H1 (cell line): ENCODE measurements at regions of chr14 and their contacts with region 1.

Region 1: DNA sequence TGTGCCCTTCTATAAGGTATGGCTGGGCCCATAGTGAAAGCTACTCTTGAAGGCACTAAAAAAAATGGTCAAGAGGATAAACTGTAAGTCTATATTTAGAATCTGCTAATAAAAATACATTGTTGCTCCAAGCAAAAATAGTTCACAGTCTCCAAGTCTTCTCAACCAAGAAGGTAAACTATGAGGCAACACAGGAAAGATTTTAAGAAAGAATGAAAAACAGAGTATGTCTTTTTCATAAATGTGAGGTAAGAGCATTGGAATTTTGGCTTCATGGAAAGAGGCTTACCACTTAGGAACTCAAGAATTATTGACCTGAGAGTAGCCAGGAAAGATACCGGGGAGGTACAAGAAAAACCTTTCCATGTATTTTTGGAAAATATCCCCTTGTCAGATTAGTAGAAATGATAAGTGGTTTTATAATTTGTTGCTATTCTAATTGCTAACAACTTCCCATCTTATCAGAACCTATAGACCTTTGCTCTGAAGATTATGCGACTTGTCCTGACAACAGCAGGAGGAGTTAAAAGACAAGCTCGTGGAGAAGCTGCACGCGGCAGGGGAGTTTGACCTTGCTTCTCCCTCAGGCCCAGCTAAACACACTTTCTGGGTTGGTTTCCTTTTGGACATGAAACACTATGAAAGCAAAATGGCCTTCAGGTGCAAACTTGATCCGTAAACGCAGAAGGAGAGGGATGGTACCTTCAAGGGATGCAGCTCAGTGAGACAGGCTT is 238.1 kb downstream of the FOXN3 start:
- DNase-seq: peak in 1 of 2 experiments; percentile 38
- H3K4me3 ChIP-seq: no peak overlapping the region
- H3K27ac ChIP-seq: no peak overlapping the region
- H3K4me1 ChIP-seq: peaks cover 0 to 2% (median 1%) of the 10 kb centered on the region in 4 experiments; a peak in 3 of 7 replicates
- H3K27me3 ChIP-seq: no peaks in the 10 kb centered on the region
- CTCF ChIP-seq: no peak
- EP300 ChIP-seq: no peak
- POLR2A ChIP-seq: no peak
- RAD21 ChIP-seq: no peak

Region 2: DNA sequence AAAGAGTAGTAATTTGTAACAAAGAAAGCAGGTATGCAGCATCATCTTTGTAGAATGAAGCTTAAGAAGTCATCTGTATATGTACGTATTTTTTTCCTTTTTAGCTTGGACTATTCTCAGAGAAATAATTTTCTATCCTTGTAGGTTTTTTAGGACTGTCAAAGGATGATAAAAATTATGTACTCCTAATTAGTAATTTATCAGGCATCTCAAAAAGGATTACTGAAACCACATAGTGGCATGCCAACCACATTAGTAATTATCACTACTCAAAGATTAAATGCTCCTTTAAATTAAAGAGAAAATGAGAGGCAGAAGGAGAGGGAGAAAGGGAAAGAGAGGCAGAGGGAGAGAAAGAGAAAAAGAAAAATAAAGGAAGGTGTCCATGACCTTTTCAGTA is 337.2 kb before region 1 on chr14:
- CTCF ChIA-PET with region 1: no interaction called
- POLR2A ChIA-PET with region 1: no interaction called
- DNase-seq: no peak
- H3K4me3 ChIP-seq: no peak overlapping the region
- H3K27ac ChIP-seq: no peak overlapping the region
- H3K4me1 ChIP-seq: no peaks in the 10 kb centered on the region
- H3K27me3 ChIP-seq: no peaks in the 10 kb centered on the region
- CTCF ChIP-seq: no peak
- EP300 ChIP-seq: no peak
- POLR2A ChIP-seq: no peak
- RAD21 ChIP-seq: no peak

Region 3: GRCh38 chr14:89093083-89093730 is 85.8 kb before region 1 on chr14:
- CTCF ChIA-PET with region 1: no interaction called
- POLR2A ChIA-PET with region 1: no interaction called
- DNase-seq: no peak
- H3K4me3 ChIP-seq: no peak overlapping the region
- H3K27ac ChIP-seq: no peak overlapping the region
- H3K4me1 ChIP-seq: no peaks in the 10 kb centered on the region
- H3K27me3 ChIP-seq: no peaks in the 10 kb centered on the region; a peak in 1 of 7 replicates
- CTCF ChIP-seq: no peak
- EP300 ChIP-seq: no peak
- POLR2A ChIP-seq: no peak
- RAD21 ChIP-seq: no peak

Region 4: GRCh38 chr14:89165189-89166181 is 13.5 kb before region 1 on chr14:
- CTCF ChIA-PET with region 1: interaction called, 41 read pairs
- POLR2A ChIA-PET with region 1: interaction called, 3 read pairs
- DNase-seq: no peak
- H3K4me3 ChIP-seq: no peak overlapping the region
- H3K27ac ChIP-seq: no peak overlapping the region
- H3K4me1 ChIP-seq: no peaks in the 10 kb centered on the region
- H3K27me3 ChIP-seq: no peaks in the 10 kb centered on the region
- CTCF ChIP-seq: no peak
- EP300 ChIP-seq: no peak
- POLR2A ChIP-seq: no peak
- RAD21 ChIP-seq: no peak

Region 5: DNA sequence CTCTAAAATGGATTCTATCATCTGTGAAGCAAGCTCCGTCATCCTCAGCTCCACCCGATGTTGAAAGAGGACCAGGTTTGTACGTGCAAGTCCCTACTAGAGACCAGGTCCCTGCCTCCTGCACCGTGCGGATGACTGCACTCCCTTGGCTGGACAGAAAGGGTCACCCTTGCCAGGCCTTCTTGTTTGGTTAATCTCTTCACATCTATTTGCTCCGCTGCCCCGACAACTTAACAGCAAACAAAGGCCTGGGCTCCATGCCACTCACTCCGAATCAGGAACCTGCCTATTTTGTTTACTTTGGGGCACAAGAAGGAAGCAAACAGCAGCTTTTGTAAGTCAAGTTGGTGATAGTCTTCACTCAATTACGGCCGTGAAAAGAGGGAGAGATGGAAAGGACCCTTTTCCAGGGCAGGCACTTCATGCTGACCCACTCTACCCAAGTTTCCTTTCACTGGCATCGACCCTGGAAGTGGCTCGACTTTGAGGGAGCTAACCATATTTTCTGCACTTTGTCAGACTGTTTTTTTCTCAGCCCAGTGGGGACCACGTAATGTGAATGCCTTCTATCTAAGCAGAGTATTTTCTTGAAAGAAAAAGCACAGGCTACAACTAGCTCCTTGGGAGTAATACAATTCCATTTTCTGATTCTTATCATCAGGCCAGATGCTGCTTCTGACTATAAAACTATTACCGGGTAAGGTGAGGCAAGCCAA is 35.4 kb after region 1 on chr14:
- CTCF ChIA-PET with region 1: interaction called, 13 read pairs
- POLR2A ChIA-PET with region 1: interaction called, 3 read pairs
- DNase-seq: no peak
- H3K4me3 ChIP-seq: no peak overlapping the region
- H3K27ac ChIP-seq: no peak overlapping the region; the same call in 1 of the 2 replicates
- H3K4me1 ChIP-seq: no peaks in the 10 kb centered on the region
- H3K27me3 ChIP-seq: no peaks in the 10 kb centered on the region
- CTCF ChIP-seq: no peak
- EP300 ChIP-seq: no peak
- POLR2A ChIP-seq: no peak
- RAD21 ChIP-seq: no peak; a peak in 1 of 4 replicates

Region 6: DNA sequence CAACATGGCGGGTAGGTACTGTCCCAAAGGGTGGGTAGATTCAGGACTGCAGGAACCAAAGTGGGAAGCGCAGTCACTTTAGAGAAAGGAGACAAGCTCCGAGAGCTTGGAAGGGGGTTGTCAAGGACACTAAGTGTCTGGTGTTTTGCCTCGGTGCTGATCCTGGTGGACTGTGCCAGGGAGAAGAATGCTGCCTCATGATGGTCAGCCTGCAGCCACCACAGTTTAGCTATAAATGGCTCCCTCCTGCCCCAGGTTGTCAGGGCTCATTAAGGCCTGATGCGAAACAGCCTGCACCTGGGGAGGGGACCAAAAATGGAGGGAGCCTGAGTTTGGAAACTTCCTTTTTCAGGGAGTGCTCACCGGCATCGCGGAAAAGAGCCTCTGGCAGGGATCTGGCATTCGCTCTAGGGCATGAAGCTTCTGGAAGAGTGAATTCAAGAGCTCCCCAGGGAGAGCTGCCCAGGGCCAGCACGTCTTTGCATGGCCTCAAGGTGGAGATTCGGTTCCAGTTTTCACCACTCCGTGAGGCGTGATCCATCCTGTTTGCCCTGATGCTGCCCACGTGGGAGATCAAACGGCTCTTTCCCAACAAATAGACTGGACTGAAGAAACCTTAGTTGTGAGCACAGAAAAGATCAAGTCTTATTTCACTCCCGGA is 74.0 kb after region 1 on chr14:
- CTCF ChIA-PET with region 1: interaction called, 12 read pairs
- POLR2A ChIA-PET with region 1: no interaction called
- DNase-seq: peak in 1 of 2 experiments; percentile 17
- H3K4me3 ChIP-seq: no peak overlapping the region
- H3K27ac ChIP-seq: no peak overlapping the region
- H3K4me1 ChIP-seq: peaks cover 0 to 14% (median 6%) of the 10 kb centered on the region in 4 experiments; a peak in 4 of 7 replicates
- H3K27me3 ChIP-seq: no peaks in the 10 kb centered on the region
- CTCF ChIP-seq: peak in 2 of 3 experiments; percentile 38 to 42; a peak in 3 of 4 replicates
- EP300 ChIP-seq: no peak
- POLR2A ChIP-seq: peak in 1 of 2 experiments; percentile 17; a peak in 1 of 3 replicates
- RAD21 ChIP-seq: peak; percentile 50 to 61

Region 7: DNA sequence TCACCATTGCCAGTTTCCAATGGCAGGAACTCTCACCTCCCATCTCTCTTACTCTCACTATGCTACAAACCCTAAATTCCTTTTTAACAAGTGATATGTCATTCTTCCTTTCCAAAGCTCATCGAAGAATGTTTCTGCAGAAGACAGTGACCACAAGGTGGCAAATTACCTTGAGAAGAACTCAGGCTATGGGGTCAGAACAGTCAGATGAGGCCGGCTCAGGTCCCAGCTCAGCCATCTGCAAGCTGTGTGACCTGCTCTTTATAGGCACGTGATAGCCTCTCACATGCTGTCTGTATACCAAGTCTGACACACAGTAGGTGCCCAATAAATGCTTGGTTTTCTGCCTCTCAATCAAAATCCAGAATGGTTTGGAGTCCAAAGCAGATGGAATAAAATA is 157.4 kb after region 1 on chr14:
- CTCF ChIA-PET with region 1: no interaction called
- POLR2A ChIA-PET with region 1: no interaction called
- DNase-seq: no peak
- H3K4me3 ChIP-seq: no peak overlapping the region
- H3K27ac ChIP-seq: 0 out of 2 replicates have a peak overlapping the region, but pooled peaks have one; percentile 0
- H3K4me1 ChIP-seq: peaks cover 6 to 21% (median 14%) of the 10 kb centered on the region in 4 experiments
- H3K27me3 ChIP-seq: no peaks in the 10 kb centered on the region
- CTCF ChIP-seq: peak in 1 of 3 experiments; percentile 44; a peak in 1 of 4 replicates
- EP300 ChIP-seq: no peak
- POLR2A ChIP-seq: no peak
- RAD21 ChIP-seq: peak; percentile 22 to 49